Activated B cell treated with CpG ODN at 0.5 μM for 24 hours (primary cell): ENCODE measurements at regions of chr2 and their contacts with region 1.

Region 1: GRCh38 chr2:37982147-37982582 is 57.1 kb downstream of the RMDN2 start:
- DNase-seq: peak; percentile 47
- ATAC-seq: peak; percentile 47
- H3K4me3 Mint-ChIP-seq: peak overlapping the region; percentile 9
- H3K27ac Mint-ChIP-seq: no peak overlapping the region
- H3K4me1 Mint-ChIP-seq: peaks cover 7% of the 10 kb centered on the region
- H3K27me3 Mint-ChIP-seq: no peaks in the 10 kb centered on the region
- CTCF ChIP-seq: peak; percentile 18

Region 2: GRCh38 chr2:37925063-37925897 is 56.9 kb before region 1 on chr2 and contains the start of gene RMDN2:
- CTCF ChIA-PET with region 1: interaction called, 3 read pairs
- POLR2A ChIA-PET with region 1: no interaction called
- intact Hi-C with region 1: loop called (anchors 1 kb)
- DNase-seq: peak; percentile 86
- ATAC-seq: peak; percentile 91
- H3K4me3 Mint-ChIP-seq: peak within 1 kb of the TSS; percentile 96
- H3K27ac Mint-ChIP-seq: peak within 1 kb of the TSS; percentile 93
- H3K4me1 Mint-ChIP-seq: peaks cover 28% of the 10 kb centered on the region
- H3K27me3 Mint-ChIP-seq: no peaks in the 10 kb centered on the region
- CTCF ChIP-seq: no peak
- total RNA-seq, gene RMDN2: 7.0 TPM in 2 replicates

Region 3: GRCh38 chr2:38037757-38038621 is 55.8 kb after region 1 on chr2:
- CTCF ChIA-PET with region 1: no interaction called
- POLR2A ChIA-PET with region 1: no interaction called
- intact Hi-C with region 1: loop called (anchors 2 kb)
- DNase-seq: peak; percentile 19
- ATAC-seq: peak; percentile 88
- H3K4me3 Mint-ChIP-seq: peak overlapping the region; percentile 78
- H3K27ac Mint-ChIP-seq: peak overlapping the region; percentile 78
- H3K4me1 Mint-ChIP-seq: peaks cover 15% of the 10 kb centered on the region
- H3K27me3 Mint-ChIP-seq: peaks cover 30% of the 10 kb centered on the region
- CTCF ChIP-seq: no peak

Region 4: GRCh38 chr2:38079116-38080052 is 97.2 kb after region 1 on chr2:
- CTCF ChIA-PET with region 1: no interaction called
- POLR2A ChIA-PET with region 1: no interaction called
- intact Hi-C with region 1: no loop called
- DNase-seq: no peak
- ATAC-seq: no peak
- H3K4me3 Mint-ChIP-seq: no peak overlapping the region
- H3K27ac Mint-ChIP-seq: no peak overlapping the region
- H3K4me1 Mint-ChIP-seq: peaks cover 18% of the 10 kb centered on the region
- H3K27me3 Mint-ChIP-seq: peaks cover 48% of the 10 kb centered on the region
- CTCF ChIP-seq: no peak

Region 5: DNA sequence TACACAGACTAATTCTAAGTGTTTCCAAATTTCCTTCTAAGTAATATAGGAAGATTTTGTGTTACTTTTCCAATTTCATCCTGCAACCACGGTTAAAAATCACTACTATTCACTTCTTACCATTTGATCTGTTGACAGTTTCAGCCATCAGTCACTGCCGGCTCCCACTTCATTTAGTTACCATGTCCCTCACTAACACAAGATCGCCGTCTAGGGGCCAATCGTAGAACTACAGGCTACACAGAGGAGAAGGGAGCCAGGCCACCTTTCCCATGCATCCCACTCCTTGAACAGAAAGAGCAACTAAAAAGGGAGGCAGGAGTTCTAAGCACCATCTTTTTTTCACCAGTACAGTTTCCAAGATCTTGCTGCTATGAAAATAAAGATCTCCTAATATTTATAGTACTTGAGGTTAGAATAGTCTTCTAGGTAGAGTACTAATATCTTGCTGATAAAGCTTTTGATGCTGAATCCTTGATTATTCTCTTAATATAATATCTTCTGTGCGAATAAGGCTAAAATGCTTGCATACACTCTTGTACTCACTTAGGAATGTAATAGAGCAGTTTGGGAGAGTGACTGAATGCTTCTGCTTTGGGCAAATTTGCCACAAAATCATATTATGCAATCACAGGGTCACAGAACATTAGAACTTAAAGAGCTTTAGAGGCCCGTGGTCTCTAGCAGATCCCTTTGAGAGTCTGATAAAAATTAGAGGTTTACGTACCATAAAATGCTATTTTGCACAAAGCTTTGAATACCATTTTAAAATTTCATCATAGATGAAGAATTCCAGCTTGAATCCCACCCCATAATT is 133.3 kb after region 1 on chr2:
- CTCF ChIA-PET with region 1: no interaction called
- POLR2A ChIA-PET with region 1: no interaction called
- intact Hi-C with region 1: loop called (anchors 1 kb)
- DNase-seq: peak; percentile 56
- ATAC-seq: peak; percentile 77
- H3K4me3 Mint-ChIP-seq: no peak overlapping the region
- H3K27ac Mint-ChIP-seq: no peak overlapping the region
- H3K4me1 Mint-ChIP-seq: peaks cover 3% of the 10 kb centered on the region
- H3K27me3 Mint-ChIP-seq: peaks cover 31% of the 10 kb centered on the region
- CTCF ChIP-seq: peak; percentile 69

Region 6: DNA sequence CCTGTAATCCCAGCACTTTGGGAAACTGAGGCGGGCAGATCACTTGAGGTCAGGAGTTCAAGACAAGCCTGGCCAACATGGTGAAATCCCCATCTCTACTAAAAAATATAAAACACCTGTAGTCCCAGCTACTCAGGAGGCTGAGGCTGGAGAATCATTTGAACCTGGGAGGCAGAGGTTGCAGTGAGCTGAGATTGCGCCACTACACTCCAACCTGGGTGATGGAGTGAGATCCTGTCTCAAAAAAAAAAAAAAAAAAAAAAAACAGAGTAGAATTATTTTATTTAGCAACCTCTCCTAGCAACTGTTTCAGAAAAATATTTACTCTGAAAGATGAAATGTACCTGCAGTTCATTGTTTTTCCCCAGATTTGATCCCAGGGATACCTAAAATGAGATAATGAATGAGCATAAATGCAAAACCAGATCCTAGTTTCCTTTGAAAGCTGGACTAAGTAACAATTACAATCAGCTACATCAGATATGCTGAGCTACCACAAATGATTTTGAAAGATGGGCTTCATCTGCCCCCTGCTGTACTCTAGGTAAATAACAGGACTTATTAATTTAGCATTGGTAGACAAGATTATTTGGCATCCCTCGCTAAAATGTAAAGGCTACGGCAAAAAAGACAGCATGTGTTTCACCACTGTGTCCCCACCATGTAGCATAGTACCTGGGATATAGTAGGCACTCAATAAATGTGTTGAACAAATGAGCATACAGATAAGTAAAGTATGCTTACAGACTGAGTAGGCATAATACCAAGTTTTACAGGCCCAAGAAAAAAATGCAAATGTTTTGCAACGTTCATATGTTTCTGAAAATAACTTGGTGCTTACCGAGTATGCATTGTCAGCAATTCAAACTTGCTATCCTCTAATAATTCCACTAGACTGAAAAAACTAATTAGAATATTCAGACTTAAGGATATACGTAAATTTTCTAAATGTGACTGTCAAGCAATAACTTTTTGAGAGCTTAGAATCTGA is 292.4 kb after region 1 on chr2:
- CTCF ChIA-PET with region 1: interaction called, 3 read pairs
- POLR2A ChIA-PET with region 1: no interaction called
- intact Hi-C with region 1: loop called (anchors 1 kb)
- DNase-seq: no peak
- ATAC-seq: peak; percentile 56
- H3K4me3 Mint-ChIP-seq: no peak overlapping the region
- H3K27ac Mint-ChIP-seq: no peak overlapping the region
- H3K4me1 Mint-ChIP-seq: peaks cover 3% of the 10 kb centered on the region
- H3K27me3 Mint-ChIP-seq: no peaks in the 10 kb centered on the region
- CTCF ChIP-seq: no peak

Region 7: DNA sequence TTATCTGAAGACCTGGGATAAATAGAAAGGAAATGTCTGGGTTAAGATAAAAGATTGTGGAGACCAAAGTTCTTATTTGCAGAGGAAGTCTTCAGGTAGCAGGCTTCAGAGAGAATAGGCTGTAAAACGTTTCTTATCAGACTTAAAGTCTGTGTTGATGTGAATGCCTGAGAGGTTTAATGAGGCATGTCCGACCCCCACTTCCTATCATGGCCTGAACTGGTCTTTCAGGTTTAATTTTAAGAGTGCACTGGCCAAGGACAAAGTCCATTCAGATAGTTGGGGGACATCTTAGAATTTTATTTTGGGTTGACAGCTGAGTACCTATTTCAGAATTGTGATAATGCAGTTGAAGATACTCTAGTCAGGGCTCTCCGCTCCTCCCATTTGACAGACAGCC is 302.8 kb after region 1 on chr2:
- CTCF ChIA-PET with region 1: no interaction called
- POLR2A ChIA-PET with region 1: no interaction called
- intact Hi-C with region 1: no loop called
- DNase-seq: no peak
- ATAC-seq: no peak
- H3K4me3 Mint-ChIP-seq: no peak overlapping the region
- H3K27ac Mint-ChIP-seq: no peak overlapping the region
- H3K4me1 Mint-ChIP-seq: no peaks in the 10 kb centered on the region
- H3K27me3 Mint-ChIP-seq: peaks cover 35% of the 10 kb centered on the region
- CTCF ChIP-seq: no peak

Region 8: DNA sequence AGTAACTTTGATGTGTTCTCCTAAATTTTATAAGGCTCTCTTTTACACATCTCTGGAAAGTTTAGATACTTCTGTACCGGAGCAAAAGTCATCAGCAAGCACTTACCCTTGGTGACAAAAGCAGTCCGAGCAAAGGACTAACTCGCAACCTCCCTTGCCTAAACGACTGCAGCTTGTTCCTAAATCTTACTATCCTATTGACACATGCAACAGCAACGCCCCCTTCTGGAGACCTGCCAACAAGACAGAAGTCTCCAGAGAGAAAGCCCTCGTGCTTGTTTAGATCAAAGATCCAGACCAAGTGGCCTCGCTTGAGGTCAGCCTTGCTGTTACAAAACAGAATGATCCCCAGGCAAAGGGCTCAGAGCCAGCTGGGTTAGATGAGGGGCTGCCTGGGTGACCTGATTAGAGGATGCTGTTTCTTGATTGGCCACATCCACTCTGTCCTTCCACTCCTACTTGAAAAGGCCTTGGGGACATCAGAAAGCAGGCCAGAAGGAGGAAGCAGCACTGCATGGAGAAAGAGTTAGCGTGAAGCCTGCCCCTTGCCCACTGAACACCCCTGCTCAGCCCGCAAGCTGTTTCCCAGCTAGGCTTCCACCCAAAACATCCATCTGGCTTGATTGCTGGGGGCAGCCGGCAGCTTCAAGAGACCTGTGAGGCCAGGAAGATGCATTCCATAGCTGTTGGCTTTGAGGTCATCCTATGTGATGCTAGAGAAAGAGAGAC is 526.3 kb after region 1 on chr2:
- CTCF ChIA-PET with region 1: interaction called, 6 read pairs
- POLR2A ChIA-PET with region 1: no interaction called
- intact Hi-C with region 1: loop called (anchors 1 kb)
- DNase-seq: peak; percentile 46
- ATAC-seq: peak; percentile 79
- H3K4me3 Mint-ChIP-seq: no peak overlapping the region
- H3K27ac Mint-ChIP-seq: no peak overlapping the region
- H3K4me1 Mint-ChIP-seq: peaks cover 4% of the 10 kb centered on the region
- H3K27me3 Mint-ChIP-seq: no peaks in the 10 kb centered on the region
- CTCF ChIP-seq: no peak

Region 9: DNA sequence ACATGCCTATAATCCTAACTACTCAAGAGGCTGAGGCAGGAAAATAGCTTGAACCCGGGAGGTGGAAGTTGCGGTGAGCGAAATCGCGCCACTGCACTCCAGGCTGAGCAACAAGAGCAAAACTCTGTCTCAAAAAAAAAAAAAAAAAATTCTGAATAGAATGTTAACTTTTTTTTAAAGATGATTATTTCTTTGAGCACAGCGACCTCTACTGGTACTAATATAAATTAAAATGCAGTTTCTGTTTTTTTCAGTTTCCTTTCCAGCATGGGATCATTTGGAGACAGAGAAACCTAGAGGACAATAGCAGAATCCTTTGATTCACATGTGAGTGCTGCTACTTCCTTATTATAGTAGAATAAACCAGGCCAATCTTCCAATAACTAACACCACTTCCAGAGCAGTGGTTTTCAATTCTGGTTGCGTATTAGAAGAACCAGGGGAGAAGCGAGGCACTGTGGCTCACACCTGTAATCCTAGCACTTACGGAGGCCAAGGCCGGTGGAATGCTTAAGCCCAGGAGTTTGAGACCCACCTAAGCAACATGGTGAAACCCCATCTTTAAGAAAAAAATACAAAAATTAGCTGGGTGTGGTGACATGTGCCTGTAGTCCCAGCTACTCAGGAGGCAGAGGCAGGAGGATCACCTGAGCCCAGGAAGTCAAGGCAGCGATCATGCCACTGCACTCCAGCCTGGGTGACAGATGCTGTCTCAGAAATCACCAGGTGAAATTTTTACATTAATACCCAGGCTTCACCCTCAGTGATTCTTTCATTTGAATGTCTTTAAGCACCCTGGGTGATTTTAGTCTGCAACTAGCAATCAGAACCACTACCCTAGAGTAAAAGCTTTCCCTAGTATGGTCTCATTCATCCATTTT is 758.9 kb after region 1 on chr2:
- CTCF ChIA-PET with region 1: no interaction called
- POLR2A ChIA-PET with region 1: no interaction called
- intact Hi-C with region 1: loop called (anchors 5 kb)
- DNase-seq: no peak
- ATAC-seq: peak; percentile 18
- H3K4me3 Mint-ChIP-seq: no peak overlapping the region
- H3K27ac Mint-ChIP-seq: peak overlapping the region; percentile 61
- H3K4me1 Mint-ChIP-seq: peaks cover 29% of the 10 kb centered on the region
- H3K27me3 Mint-ChIP-seq: no peaks in the 10 kb centered on the region
- CTCF ChIP-seq: no peak